Calu3 (cell line): ENCODE measurements at regions of chr1 and their contacts with region 1.

Region 1: DNA sequence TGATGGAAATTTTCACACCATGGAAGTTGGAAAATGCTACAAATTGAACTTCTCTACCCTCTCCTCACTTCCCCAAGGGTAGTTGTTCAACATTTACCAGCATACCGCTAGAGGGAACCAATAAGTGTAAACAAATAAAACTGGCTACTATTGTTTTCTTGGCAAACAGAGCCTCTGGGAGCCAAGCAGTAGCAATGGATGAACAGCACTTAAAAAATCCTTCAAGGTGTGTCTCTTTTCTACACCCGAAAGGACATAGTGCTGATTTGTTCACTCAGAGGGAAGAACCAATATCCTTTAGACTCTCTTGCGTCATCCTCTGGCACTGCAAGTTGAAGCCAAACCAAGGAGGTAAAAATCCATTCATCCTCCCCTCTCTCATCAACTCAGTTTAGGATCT is 161.5 kb downstream of the TBX15 start:
- DNase-seq: no peak
- H3K4me3 Mint-ChIP-seq: no peak overlapping the region
- H3K27ac Mint-ChIP-seq: no peak overlapping the region
- H3K4me1 Mint-ChIP-seq: no peaks in the 10 kb centered on the region
- H3K27me3 Mint-ChIP-seq: no peaks in the 10 kb centered on the region
- CTCF ChIP-seq: no peak

Region 2: GRCh38 chr1:119008483-119009311 is 182.0 kb after region 1 on chr1:
- CTCF ChIA-PET with region 1: no interaction called
- intact Hi-C with region 1: loop called (anchors 5 kb)
- DNase-seq: peak; percentile 58
- H3K4me3 Mint-ChIP-seq: peak overlapping the region; percentile 70
- H3K27ac Mint-ChIP-seq: peak overlapping the region; percentile 72
- H3K4me1 Mint-ChIP-seq: peaks cover 28% of the 10 kb centered on the region
- H3K27me3 Mint-ChIP-seq: peaks cover 35% of the 10 kb centered on the region
- CTCF ChIP-seq: no peak